ENCODE measurements at regions of chr12 and their contacts with region 1.

Region 1: DNA sequence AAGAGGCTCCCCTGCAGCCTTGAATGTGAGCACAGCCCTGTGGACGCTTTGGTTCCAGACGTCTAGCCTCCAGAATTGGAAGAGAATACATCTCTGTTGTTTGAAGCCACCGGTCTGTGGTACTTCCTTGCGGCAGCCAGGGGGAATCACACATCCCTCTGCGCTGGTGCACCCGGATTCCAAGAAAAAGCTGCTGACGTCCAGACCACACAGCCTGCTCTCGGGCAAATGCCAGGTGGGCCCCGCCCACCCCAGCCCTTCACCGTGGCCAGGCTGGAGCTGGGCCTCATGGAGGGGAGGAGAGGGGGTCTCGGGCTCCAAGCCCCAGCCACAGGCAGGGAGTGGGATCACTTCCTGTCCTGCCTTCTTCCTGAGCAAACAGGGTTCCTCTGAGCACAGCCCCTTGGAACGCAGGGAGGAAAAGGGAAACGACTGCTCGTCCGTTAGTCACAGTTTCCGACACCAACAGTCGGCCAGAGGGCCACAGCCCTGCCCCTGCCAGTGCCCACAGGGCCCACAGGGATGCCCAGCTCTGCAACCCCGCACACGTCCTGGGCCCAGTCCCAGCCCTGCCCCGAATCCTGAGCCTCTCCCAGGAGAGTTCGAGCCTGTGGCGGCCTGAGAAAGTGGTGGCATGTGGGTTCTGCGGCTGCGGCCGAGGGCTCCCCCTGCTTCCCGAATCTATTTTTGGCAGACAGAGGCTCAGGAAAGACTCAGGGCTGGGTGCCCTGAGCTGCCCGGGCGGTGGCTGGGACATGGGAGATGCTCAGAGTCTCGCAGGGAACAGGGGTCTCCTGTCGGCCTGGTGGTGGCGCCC is 85.3 kb downstream of the RFLNA start:
- DNase-seq: peak; percentile 81 to 97
- H3K4me3 ChIP-seq: peak overlapping the region in 1 of 2 donors; percentile 8
- H3K27ac ChIP-seq: peak overlapping the region; percentile 77 to 86
- H3K4me1 ChIP-seq: peaks cover 17 to 58% (median 50%) of the 10 kb centered on the region in 4 donors
- H3K27me3 ChIP-seq: no peaks in the 10 kb centered on the region
- CTCF ChIP-seq: peak; percentile 65 to 68

Region 2: DNA sequence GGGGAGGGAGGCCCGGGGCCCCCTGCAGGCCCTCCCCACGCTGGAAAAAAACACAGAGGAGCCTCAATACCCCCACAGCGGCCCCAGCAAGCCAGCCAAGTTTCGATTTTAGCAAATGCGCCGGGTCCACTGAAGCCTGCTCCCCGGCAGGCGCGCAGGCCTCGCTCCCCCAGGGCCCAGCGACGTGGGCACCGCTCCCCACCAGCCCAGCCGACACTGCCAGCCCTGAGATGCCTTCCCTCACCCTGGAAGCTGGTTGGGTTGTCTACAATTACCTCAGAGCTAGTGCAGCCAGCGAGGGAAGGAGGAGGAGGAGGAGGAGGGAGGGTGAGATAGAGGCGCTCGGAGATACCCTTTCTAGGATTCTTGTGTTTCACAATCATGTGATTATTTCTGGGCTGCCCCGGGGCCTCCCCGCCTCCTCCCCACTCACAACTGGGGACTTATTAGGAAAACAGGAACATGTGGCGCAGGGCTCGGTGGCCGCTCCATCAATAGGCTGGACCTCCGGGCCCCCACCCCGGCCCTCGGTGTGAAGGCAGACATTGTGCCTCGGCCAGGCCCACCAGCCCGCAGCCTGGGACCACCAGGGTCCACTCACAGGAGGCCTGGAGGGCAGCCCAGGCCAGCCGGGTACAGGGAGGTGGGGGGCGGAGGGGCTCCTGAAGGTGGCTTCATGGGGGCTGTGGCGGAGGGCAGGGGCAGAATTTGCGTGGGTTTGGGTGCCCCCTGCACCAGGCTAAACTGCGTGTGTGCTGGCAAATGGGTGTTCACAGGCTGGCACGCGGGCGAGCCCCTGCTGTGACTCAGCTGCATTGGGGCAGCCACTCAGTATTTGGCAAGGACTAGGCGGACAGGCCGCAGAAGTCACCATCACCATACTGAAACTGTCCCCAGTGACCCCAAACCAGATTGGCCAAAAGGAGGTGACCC is 77.4 kb after region 1 on chr12:
- intact Hi-C with region 1: loop called (anchors 5 kb)
- DNase-seq: peak; percentile 95 to 97
- H3K4me3 ChIP-seq: peak overlapping the region; percentile 34 to 42
- H3K27ac ChIP-seq: peak overlapping the region; percentile 80 to 94
- H3K4me1 ChIP-seq: peaks cover 10 to 60% (median 49%) of the 10 kb centered on the region in 4 donors
- H3K27me3 ChIP-seq: no peaks in the 10 kb centered on the region
- CTCF ChIP-seq: peak in 1 of 2 experiments; percentile 12

Region 3: DNA sequence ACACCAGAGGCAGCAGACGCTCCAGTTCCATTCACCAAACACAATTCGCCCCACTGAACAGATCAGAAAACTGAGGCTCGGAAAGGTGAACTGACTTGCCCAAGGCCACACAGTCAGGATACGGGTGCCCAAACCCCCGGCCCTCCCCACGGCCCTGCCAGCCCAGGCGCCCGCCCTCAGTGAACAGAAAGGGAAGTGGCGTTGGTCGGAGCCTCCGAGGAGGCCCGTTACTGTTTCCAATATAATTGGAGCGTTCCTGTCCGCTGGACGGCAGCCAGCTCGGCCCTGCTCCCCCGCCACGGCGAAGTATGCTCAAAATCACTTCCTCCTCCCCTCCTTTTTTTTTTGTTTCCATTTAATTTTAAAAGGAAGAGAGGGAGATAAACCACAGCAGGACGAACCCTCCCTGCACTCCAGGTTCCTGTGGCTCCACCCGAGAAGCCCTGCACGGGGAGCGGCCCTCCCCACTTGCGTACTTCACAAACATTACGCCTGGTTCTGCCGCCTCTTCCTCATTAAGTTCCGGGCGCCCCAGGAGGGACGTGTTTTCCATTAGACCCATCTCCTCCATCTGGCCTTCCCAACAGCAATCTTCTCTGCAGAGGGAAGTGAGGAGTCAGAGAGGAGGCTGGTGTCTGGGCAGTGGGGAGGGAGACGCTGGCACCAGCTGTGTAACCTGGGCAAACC is 126.1 kb after region 1 on chr12:
- intact Hi-C with region 1: no loop called
- DNase-seq: peak; percentile 87
- H3K4me3 ChIP-seq: peak overlapping the region in 1 of 2 donors; percentile 15
- H3K27ac ChIP-seq: peak overlapping the region; percentile 50
- H3K4me1 ChIP-seq: peaks cover 6 to 85% (median 55%) of the 10 kb centered on the region in 4 donors
- H3K27me3 ChIP-seq: no peaks in the 10 kb centered on the region
- CTCF ChIP-seq: no peak